Stomach (tissue), 19 donors: ENCODE measurements at regions of chr10 and their contacts with region 1.

Region 1: DNA sequence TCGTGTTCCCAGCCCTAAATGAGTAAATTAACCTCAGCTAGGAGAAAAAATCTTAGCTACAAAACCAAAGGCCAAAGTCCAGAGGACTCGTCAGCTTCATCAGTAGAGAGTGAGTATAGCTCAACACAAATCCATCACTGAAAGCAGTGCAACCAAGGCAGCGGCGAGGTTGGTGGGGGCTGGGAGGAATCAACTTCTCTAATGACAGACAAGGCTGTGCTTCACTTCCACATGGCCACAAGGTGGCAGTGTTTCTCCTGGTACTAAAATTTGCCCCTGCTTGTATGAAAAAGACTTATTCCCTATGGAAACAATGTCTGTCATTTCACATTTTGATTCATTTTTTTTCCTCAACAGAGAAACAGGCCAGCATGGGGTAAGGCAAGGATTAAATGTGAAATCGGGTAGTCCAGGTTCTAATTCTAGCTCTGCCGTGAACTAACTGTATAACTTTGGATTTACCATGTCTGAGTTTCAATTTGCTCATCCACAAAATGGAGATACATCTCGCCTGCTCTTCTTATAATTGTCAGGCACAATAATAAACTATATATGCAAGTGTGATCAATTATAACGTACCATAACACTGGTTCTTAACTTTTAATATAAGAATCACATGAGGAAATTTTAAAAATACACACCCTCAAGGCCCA is 39.3 kb downstream of the FAS start:
- DNase-seq: peak; percentile 72 to 92
- H3K4me3 ChIP-seq: no peak overlapping the region
- H3K27ac ChIP-seq: peak overlapping the region in 1 of 5 donors; percentile 42
- H3K4me1 ChIP-seq: peaks cover 6 to 36% (median 14%) of the 10 kb centered on the region in 4 donors
- H3K27me3 ChIP-seq: no peaks in the 10 kb centered on the region
- CTCF ChIP-seq: peak in 5 of 7 experiments; percentile 84 to 95 (median 88)
- EP300 ChIP-seq: no peak
- POLR2A ChIP-seq: no peak

Region 2: GRCh38 chr10:88642978-88643377 is 386.9 kb before region 1 on chr10:
- intact Hi-C with region 1: no loop called
- DNase-seq: peak in 1 of 2 donors; percentile 24
- H3K4me3 ChIP-seq: no peak overlapping the region
- H3K27ac ChIP-seq: peak overlapping the region in 3 of 5 donors; percentile 1 to 36 (median 33)
- H3K4me1 ChIP-seq: peaks cover 6 to 26% (median 11%) of the 10 kb centered on the region in 4 donors
- H3K27me3 ChIP-seq: no peaks in the 10 kb centered on the region
- CTCF ChIP-seq: no peak
- EP300 ChIP-seq: no peak
- POLR2A ChIP-seq: no peak

Region 3: GRCh38 chr10:89213191-89213808 is 183.4 kb after region 1 on chr10:
- intact Hi-C with region 1: loop called (anchors 5 kb)
- DNase-seq: peak in 1 of 2 donors; percentile 77
- H3K4me3 ChIP-seq: no peak overlapping the region
- H3K27ac ChIP-seq: no peak overlapping the region
- H3K4me1 ChIP-seq: peaks cover 5 to 16% (median 11%) of the 10 kb centered on the region in 4 donors
- H3K27me3 ChIP-seq: peaks cover 0 to 21% (median 12%) of the 10 kb centered on the region in 3 donors
- CTCF ChIP-seq: peak in 5 of 7 experiments; percentile 20 to 75 (median 46)
- EP300 ChIP-seq: no peak
- POLR2A ChIP-seq: no peak